ENCODE measurements at regions of chr13 and their contacts with region 1.

Region 1: DNA sequence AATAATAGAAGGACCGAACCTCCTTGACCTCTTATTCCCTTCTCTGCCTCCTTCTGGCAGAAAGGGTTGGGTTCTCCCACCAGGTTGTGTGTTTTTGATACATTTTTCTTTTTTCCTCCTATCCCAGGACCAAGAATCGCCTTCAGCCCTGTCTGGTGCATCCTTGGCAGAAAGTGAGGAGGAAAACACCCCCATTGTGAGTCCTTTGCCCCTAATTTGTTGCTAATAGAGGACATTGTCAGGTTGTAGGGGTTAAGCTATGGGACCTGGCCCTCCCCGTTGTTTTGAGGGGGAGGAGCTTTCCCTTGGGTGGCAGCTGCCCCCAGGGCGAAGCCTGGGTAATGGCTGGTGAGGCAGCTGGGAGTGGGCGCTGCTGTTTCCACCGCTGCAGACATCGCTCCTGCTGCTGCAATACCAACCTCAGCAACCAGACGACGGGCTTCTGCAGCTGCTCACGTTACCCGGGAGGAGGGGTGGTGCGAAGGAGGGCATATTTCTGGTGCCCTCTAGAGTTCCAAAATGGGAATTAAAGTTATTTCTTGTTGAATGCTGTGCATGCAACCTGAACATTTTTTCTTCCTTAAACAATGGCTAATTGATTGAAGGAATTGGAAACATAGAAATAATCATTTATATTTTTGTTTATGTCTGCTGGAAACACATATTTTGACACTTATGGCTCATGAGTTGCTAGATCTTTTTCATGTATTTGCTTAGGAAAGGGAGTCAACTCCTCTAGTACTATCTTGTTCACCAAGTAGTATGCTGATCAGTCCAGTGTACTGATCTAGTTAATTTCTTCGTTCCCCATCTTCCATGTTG is 1.5 kb downstream of the ZMYM2 start:
- DNase-seq: peak; percentile 76 to 98 (median 80)

Region 2: DNA sequence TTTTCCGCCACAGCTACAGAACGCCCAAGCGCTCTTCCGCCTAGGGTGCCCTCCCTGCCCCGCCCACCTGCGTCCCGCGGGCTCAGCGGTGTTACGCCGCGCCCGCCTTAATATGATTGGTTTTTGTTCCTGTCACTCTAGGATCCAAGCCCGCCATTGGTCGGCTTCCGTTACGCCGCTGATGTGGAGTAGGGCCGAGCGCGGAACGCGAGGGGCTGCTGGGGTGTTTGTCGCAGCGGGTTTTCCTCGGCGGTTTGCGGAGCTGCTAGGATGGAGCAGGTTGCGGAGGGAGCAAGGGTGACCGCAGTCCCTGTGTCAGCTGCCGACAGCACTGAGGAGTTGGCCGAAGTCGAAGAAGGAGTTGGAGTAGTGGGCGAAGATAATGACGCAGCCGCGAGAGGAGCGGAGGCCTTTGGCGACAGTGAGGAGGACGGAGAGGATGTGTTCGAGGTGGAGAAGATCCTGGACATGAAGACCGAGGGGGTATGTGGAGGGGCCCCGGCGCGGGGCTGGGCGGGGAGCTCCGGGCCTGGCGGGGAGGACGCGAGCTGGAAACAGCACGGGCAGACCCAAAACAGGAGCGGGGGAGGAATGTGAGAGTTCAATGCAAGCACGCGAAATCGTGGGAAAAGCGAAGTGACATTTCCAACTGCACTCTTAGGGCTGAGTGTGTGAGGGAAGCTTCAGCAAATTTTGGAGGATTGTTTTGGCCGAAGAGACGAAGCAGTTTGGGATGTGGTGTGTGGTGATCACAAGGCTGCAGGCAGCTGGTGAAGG is 326.4 kb before region 1 on chr13 and contains the start of gene MPHOSPH8:
- intact Hi-C with region 1: loop called (anchors 5 kb)
- DNase-seq: peak; percentile 91 to 98 (median 92)

Region 3: DNA sequence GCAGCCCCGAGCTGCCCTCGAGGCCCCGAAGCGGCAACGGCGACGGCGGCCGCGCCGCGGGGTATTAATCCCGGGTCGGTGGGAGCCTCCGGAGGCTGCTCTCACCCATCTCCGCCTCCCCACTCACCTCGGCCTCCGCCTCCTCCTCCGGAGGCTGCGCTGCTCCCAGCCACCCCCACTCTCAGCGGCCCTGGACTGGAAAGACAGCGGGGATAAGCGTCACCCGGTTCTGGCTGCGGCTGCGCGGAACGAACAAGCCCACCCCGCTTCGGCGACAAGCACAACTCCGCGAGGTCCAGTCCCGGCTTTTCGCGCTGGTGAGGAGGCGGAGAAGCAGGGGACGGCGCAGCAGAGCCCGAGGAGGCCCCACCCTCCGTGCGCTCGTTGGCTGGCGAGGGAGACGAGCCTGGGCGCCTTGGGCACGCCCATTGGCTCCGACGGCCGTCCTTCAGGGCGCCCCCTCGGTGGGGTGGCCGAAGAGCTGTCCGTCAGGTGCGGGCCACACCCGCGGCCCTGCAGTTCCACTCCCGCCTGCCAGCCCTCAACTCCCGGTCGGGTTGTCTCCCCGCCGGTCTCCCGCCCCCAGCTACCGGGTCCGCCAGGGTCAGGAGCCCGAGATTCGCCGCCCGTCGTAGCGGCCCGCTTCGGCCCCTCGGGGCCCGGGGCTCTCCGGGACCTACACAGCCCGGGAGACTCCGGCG is 96.6 kb before region 1 on chr13 and contains the start of gene ZMYM5:
- intact Hi-C with region 1: loop called (anchors 2 kb)
- DNase-seq: peak; percentile 98 to 100 (median 99)

Region 4: GRCh38 chr13:20043207-20043925 is 83.3 kb after region 1 on chr13:
- intact Hi-C with region 1: no loop called
- DNase-seq: peak in 1 of 10 donors; percentile 57

Region 5: DNA sequence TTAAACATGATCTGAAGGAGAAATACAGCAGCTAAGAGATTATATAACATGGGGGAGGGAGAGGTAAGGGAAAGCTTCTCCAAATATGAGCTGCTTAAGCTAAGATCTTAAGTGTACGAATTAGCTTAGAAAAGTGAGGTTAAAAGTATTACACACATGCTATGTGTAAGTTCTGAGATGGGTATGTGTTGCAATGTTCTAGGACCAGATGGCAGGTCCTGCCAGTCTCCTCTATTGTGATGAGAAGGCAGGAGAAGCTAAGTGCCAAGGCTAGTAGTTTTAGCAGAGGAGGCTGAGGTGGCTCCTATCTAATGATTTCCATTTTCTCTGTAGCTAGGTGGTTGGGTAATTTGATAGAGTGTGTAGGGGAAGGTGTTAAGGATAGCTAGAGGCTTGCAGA is 1586.3 kb after region 1 on chr13:
- intact Hi-C with region 1: no loop called
- DNase-seq: peak in 1 of 10 donors; percentile 3

Measured in posterior cingulate gyrus (tissue), 11 donors.